HCT116 (cell line): ENCODE measurements at regions of chr6 and their contacts with region 1.

Region 1: GRCh38 chr6:143940011-143940597 is 68.0 kb downstream of the PLAGL1 start:
- DNase-seq: peak; percentile 62
- ATAC-seq: peak; percentile 89
- H3K4me3 ChIP-seq: no peak overlapping the region
- H3K27ac ChIP-seq: no peak overlapping the region
- H3K4me1 ChIP-seq: no peaks in the 10 kb centered on the region; a peak in 1 of 4 replicates
- H3K27me3 ChIP-seq: no peaks in the 10 kb centered on the region
- CTCF ChIP-seq: peak; percentile 85 to 94 (median 94)
- POLR2A ChIP-seq: no peak
- RAD21 ChIP-seq: peak; percentile 66

Region 2: DNA sequence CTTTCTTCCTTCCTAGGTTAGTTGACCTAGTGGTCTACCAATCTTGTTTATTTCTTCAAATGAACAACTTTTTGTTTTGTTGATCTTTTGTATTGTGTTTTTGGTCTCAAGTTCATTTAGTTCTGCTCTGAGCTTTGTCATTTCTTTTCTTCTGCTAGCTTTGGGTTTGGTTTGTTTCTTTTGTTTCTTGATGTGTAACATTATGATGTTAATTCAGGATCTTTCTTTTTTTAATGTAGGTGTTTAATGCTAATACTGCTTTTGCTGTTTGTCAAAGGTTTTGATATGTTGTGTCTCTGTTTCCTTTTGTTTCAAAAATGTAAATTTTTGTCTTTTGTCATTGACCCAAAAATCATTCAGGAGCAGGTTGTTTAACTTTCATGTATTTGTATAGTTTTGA is 10.1 kb before region 1 on chr6:
- CTCF ChIA-PET with region 1: interaction called, 10 read pairs
- POLR2A ChIA-PET with region 1: no interaction called
- RAD21 ChIA-PET with region 1: no interaction called
- intact Hi-C with region 1: no loop called
- DNase-seq: no peak
- ATAC-seq: no peak
- H3K4me3 ChIP-seq: no peak overlapping the region
- H3K27ac ChIP-seq: no peak overlapping the region
- H3K4me1 ChIP-seq: no peaks in the 10 kb centered on the region
- H3K27me3 ChIP-seq: no peaks in the 10 kb centered on the region
- CTCF ChIP-seq: no peak
- POLR2A ChIP-seq: no peak
- RAD21 ChIP-seq: no peak

Region 3: GRCh38 chr6:143958839-143959399 is 18.8 kb after region 1 on chr6:
- CTCF ChIA-PET with region 1: interaction called, 10 read pairs
- POLR2A ChIA-PET with region 1: no interaction called
- RAD21 ChIA-PET with region 1: no interaction called
- intact Hi-C with region 1: no loop called
- DNase-seq: no peak
- ATAC-seq: no peak
- H3K4me3 ChIP-seq: no peak overlapping the region
- H3K27ac ChIP-seq: no peak overlapping the region
- H3K4me1 ChIP-seq: no peaks in the 10 kb centered on the region
- H3K27me3 ChIP-seq: no peaks in the 10 kb centered on the region
- CTCF ChIP-seq: no peak
- POLR2A ChIP-seq: no peak
- RAD21 ChIP-seq: no peak

Region 4: GRCh38 chr6:144013486-144013909 is 73.4 kb after region 1 on chr6:
- CTCF ChIA-PET with region 1: interaction called, 24 read pairs
- POLR2A ChIA-PET with region 1: no interaction called
- RAD21 ChIA-PET with region 1: interaction called, 3 to 4 read pairs
- intact Hi-C with region 1: loop called (anchors 1 kb)
- DNase-seq: peak; percentile 73
- ATAC-seq: peak; percentile 79
- H3K4me3 ChIP-seq: no peak overlapping the region
- H3K27ac ChIP-seq: no peak overlapping the region
- H3K4me1 ChIP-seq: 0 out of 4 replicates have a peak, but pooled peaks cover 0 to 3% of the 10 kb centered on the region in 2 experiments
- H3K27me3 ChIP-seq: no peaks in the 10 kb centered on the region
- CTCF ChIP-seq: peak; percentile 86 to 90 (median 89)
- POLR2A ChIP-seq: no peak
- RAD21 ChIP-seq: peak; percentile 96

Region 5: DNA sequence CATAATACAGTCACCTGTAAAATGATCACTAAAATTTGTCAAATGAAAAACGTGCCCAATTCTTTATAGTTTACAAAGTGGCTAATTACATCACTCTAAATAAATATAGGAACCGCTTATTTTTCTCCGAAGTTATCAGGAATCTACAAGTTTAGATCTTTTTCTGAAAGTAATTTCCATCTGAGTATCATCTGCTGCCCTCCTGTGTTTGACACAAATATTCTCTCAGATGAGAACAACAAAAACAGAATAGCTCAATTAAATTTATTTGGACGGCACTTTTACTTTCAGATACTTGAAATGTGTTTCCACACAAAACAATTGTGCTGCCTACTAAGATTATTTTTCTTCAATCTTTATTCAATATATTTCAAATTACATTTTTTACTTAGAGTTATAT is 150.3 kb after region 1 on chr6:
- CTCF ChIA-PET with region 1: interaction called, 10 read pairs
- POLR2A ChIA-PET with region 1: no interaction called
- RAD21 ChIA-PET with region 1: no interaction called
- intact Hi-C with region 1: no loop called
- DNase-seq: no peak
- ATAC-seq: no peak
- H3K4me3 ChIP-seq: no peak overlapping the region
- H3K27ac ChIP-seq: no peak overlapping the region
- H3K4me1 ChIP-seq: peaks cover 5 to 9% of the 10 kb centered on the region in 2 experiments; a peak in 3 of 4 replicates
- H3K27me3 ChIP-seq: no peaks in the 10 kb centered on the region
- CTCF ChIP-seq: peak in 1 of 3 experiments; percentile 19; a peak in 2 of 6 replicates
- POLR2A ChIP-seq: no peak
- RAD21 ChIP-seq: peak; percentile 48; the same call in 1 of the 2 replicates

Region 6: DNA sequence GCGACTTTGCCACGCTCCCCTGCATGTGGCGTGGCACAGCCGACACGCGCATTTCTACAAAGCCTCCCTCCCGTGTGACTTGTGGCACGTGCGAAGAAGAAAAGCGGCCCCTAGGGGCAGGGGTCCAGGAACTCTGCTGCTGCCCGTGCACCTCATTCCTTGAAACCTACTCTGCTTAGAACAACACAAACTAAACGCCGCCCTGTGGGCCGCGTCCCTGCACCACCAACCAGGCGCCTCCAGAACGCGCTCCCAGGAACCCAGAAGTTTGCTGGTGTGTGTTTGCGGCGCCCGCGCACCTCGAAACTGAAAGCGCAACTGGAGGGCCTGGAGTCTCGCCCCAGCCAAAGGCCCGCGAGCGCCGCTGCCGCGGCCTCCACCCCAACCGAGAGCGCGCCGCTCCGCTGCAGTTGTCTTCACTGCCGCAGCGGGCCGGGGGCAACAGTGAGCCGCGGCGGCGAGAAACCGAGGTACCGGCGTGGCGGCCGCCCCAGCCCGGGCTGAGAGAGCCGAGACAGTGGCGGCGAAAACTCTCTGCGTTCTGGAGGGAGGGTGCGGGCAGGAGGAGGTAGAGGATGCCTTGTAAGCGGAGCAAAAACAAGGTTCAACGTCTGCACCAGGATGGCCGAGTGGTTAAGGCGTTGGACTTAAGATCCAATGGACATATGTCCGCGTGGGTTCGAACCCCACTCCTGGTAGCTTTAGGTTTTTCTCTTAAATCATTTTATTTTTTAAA is 276.0 kb after region 1 on chr6:
- CTCF ChIA-PET with region 1: interaction called, 3 read pairs
- POLR2A ChIA-PET with region 1: no interaction called
- RAD21 ChIA-PET with region 1: no interaction called
- intact Hi-C with region 1: loop called (anchors 5 kb)
- DNase-seq: peak; percentile 91
- ATAC-seq: peak; percentile 87
- H3K4me3 ChIP-seq: peak overlapping the region; percentile 45 to 58
- H3K27ac ChIP-seq: peak overlapping the region; percentile 61
- H3K4me1 ChIP-seq: peaks cover 7 to 22% of the 10 kb centered on the region in 2 experiments; a peak in 3 of 4 replicates
- H3K27me3 ChIP-seq: no peaks in the 10 kb centered on the region
- CTCF ChIP-seq: peak; percentile 59 to 64 (median 63); a peak in 5 of 6 replicates
- POLR2A ChIP-seq: no peak
- RAD21 ChIP-seq: peak; percentile 69